ENCODE measurements at regions of chr6 and their contacts with region 1.

Region 1: GRCh38 chr6:56902641-56903464 is 52.1 kb upstream of the BEND6 start:
- DNase-seq: no peak
- H3K4me3 ChIP-seq: no peak overlapping the region
- H3K27ac ChIP-seq: no peak overlapping the region
- H3K4me1 ChIP-seq: no peaks in the 10 kb centered on the region
- H3K27me3 ChIP-seq: no peaks in the 10 kb centered on the region
- CTCF ChIP-seq: peak in 2 of 3 experiments; percentile 41 to 60; a peak in 2 of 4 replicates
- EP300 ChIP-seq: no peak
- POLR2A ChIP-seq: no peak
- RAD21 ChIP-seq: peak; percentile 52 to 55

Region 2: DNA sequence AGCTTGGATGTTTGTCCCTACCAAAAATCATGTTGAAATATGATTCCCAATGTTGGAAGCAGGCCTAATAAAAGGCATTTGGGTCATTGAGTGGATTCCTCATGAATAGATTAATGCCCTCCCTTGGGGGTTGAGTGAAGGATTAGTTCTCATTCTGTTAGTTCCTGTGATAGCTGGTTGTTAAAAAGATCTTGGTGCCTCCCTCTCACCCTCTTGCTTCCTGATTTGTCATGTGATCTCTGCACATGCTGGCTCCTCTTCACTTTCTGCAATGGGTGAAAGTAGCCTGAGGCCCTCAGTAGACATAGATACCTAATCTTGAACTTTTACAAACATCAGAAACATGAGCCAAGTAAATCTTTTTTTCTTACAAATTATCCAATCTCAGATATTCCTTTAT is 1844.2 kb before region 1 on chr6:
- CTCF ChIA-PET with region 1: no interaction called
- POLR2A ChIA-PET with region 1: no interaction called
- DNase-seq: no peak
- H3K4me3 ChIP-seq: no peak overlapping the region
- H3K27ac ChIP-seq: no peak overlapping the region
- H3K4me1 ChIP-seq: no peaks in the 10 kb centered on the region
- H3K27me3 ChIP-seq: no peaks in the 10 kb centered on the region
- CTCF ChIP-seq: no peak
- EP300 ChIP-seq: no peak
- POLR2A ChIP-seq: no peak
- RAD21 ChIP-seq: no peak

Region 3: GRCh38 chr6:56814308-56814707 is 88.5 kb before region 1 on chr6:
- CTCF ChIA-PET with region 1: no interaction called
- POLR2A ChIA-PET with region 1: no interaction called
- DNase-seq: no peak
- H3K4me3 ChIP-seq: no peak overlapping the region
- H3K27ac ChIP-seq: no peak overlapping the region
- H3K4me1 ChIP-seq: no peaks in the 10 kb centered on the region; a peak in 1 of 7 replicates
- H3K27me3 ChIP-seq: no peaks in the 10 kb centered on the region
- CTCF ChIP-seq: no peak
- EP300 ChIP-seq: no peak
- POLR2A ChIP-seq: no peak
- RAD21 ChIP-seq: no peak

Region 4: DNA sequence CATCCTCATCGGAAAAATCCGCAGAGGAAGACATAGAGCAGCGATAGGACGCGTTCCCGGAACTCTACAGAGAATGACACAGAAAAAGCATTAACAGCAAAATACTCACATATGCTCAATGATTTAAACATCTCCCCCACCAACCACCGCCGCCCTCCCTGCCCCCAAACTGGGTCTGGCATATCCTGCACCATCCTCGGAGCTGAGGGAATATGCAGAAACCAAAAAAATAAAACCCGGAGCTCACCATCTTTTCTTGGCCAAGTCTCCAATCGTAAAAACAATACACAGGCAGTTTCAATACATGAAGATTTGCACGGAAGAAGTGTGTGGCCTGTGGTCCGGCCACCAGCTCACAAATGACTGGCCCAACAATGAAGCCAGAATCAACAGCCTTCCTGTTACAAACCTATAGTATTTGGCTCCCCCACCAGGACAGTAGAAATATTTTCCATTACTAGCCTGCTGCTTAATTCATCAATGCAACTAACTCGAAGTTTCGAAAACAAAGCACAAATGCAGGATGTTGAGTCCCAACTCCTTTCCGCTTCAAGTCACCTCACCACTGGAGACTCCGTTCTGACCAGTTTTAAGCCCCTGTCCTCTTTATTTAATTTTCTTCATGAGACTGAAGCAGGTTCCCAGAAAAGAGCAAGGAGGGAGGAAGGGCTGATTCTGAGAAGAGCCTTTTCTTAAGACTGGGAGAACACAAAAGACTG is 51.2 kb before region 1 on chr6:
- CTCF ChIA-PET with region 1: interaction called, 14 read pairs
- POLR2A ChIA-PET with region 1: no interaction called
- DNase-seq: peak in 1 of 2 experiments; percentile 69
- H3K4me3 ChIP-seq: peak overlapping the region; percentile 74 to 82 (median 79)
- H3K27ac ChIP-seq: no peak overlapping the region
- H3K4me1 ChIP-seq: peaks cover 5 to 18% (median 14%) of the 10 kb centered on the region in 4 experiments; a peak in 6 of 7 replicates
- H3K27me3 ChIP-seq: no peaks in the 10 kb centered on the region
- CTCF ChIP-seq: peak in 2 of 3 experiments; percentile 66 to 71; a peak in 3 of 4 replicates
- EP300 ChIP-seq: peak in 1 of 2 experiments; percentile 91; a peak in 1 of 3 replicates
- POLR2A ChIP-seq: peak in 1 of 2 experiments; percentile 58; a peak in 1 of 3 replicates
- RAD21 ChIP-seq: peak; percentile 75 to 84

Region 5: DNA sequence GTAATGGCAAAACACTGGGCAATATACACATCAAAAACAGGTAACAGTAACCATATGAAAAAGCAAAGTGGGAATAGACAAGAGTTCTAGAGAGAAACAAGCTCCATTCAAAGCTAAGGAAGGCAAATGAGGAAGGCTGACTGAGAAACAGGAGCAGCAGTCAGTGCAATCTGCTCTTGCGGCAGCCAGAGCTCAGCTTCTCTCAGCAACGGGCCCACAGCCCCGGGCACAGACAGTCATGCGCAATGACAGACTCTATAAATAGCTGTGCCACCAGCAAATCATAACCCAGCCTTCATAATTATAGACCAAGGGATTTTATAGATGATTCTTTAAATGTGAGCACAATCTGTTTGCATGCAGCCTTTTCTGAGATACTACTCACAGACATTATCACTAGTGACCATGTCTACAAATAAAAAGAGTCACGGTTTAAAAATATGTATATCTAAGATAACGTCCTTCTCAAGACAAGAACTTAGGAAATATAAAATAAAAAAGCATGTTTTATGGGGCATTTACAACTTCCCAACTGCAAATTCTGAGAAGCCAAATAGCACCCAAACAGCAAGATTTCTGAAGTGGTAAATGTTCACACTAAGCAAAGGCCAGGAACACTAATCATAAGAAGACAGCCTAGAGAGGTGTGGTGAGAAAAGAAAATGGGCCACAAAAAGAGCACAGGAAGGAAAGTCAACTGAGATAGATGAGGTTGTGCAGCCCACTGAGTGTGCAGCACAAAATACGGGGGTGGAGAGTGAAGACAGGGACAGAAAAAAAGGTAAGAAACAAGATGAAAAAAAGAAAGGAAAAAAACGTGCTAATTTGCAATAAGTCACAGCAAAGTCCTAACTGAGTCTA is 12.2 kb after region 1 on chr6:
- CTCF ChIA-PET with region 1: interaction called, 41 read pairs
- POLR2A ChIA-PET with region 1: no interaction called
- DNase-seq: no peak
- H3K4me3 ChIP-seq: no peak overlapping the region
- H3K27ac ChIP-seq: no peak overlapping the region
- H3K4me1 ChIP-seq: peaks cover 2 to 10% (median 6%) of the 10 kb centered on the region in 4 experiments; a peak in 4 of 7 replicates
- H3K27me3 ChIP-seq: no peaks in the 10 kb centered on the region
- CTCF ChIP-seq: no peak
- EP300 ChIP-seq: no peak
- POLR2A ChIP-seq: no peak
- RAD21 ChIP-seq: no peak

Region 6: DNA sequence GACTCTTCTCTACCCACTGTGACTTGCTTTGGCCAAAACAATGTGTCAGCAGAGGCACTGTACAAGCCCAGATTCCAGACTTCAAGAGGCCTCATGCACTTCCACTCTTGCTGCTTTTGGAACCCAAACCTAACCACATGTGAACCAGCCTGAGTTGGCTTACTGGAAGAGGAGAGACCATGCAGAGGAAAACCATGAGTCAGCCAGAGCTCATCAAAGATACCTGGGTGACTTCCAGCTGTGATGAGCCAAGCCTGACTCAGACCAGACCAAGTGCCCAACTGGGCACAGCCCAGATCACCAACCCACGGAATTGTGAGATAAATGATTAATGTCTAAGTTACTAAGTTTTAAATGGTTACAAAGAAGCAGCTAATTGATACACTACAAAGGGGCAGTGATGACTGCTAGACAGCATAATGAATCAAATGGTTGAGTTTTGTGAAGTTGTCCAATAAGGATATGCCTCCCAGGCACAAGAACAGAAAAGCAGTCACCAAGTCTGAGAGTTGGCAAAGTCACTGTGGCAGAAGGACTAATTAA is 35.9 kb after region 1 on chr6:
- CTCF ChIA-PET with region 1: interaction called, 66 read pairs
- POLR2A ChIA-PET with region 1: no interaction called
- DNase-seq: no peak
- H3K4me3 ChIP-seq: no peak overlapping the region
- H3K27ac ChIP-seq: no peak overlapping the region
- H3K4me1 ChIP-seq: no peaks in the 10 kb centered on the region
- H3K27me3 ChIP-seq: no peaks in the 10 kb centered on the region
- CTCF ChIP-seq: no peak
- EP300 ChIP-seq: no peak
- POLR2A ChIP-seq: no peak
- RAD21 ChIP-seq: no peak

Region 7: DNA sequence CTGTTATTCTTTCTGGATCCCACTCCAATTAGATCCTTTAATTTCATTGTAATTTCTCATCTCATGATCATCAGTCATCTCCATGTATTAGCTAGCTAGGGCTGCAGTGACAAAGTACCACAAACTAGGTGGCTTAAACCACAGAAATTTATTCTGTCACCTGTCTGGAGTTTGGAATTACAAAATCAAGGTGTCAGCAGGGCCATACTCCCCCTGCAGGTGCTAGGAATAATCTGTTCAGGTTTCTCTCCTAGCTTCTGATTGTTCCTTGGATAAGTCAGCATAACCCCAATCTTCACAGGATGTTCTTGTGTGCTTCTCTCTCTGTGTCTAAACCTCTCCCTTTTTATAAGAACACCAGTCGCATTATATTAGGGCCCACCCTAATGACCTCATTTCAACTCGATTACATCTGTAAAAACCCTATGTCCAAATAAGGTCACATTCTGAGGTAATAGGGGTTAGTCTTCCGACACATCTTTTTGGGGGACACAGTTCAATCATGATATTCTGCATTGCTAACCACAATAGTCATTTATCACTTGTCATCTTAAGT is 92.6 kb after region 1 on chr6:
- CTCF ChIA-PET with region 1: interaction called, 40 read pairs
- POLR2A ChIA-PET with region 1: interaction called, 3 read pairs
- DNase-seq: no peak
- H3K4me3 ChIP-seq: no peak overlapping the region
- H3K27ac ChIP-seq: no peak overlapping the region
- H3K4me1 ChIP-seq: no peaks in the 10 kb centered on the region
- H3K27me3 ChIP-seq: no peaks in the 10 kb centered on the region
- CTCF ChIP-seq: peak in 2 of 3 experiments; percentile 48 to 63; a peak in 3 of 4 replicates
- EP300 ChIP-seq: no peak
- POLR2A ChIP-seq: no peak
- RAD21 ChIP-seq: peak; percentile 42 to 59

Measured in H1 (cell line).